Naive thymus-derived CD8-positive, alpha-beta T cell (primary cell): ENCODE measurements at regions of chr22 and their contacts with region 1.

Region 1: DNA sequence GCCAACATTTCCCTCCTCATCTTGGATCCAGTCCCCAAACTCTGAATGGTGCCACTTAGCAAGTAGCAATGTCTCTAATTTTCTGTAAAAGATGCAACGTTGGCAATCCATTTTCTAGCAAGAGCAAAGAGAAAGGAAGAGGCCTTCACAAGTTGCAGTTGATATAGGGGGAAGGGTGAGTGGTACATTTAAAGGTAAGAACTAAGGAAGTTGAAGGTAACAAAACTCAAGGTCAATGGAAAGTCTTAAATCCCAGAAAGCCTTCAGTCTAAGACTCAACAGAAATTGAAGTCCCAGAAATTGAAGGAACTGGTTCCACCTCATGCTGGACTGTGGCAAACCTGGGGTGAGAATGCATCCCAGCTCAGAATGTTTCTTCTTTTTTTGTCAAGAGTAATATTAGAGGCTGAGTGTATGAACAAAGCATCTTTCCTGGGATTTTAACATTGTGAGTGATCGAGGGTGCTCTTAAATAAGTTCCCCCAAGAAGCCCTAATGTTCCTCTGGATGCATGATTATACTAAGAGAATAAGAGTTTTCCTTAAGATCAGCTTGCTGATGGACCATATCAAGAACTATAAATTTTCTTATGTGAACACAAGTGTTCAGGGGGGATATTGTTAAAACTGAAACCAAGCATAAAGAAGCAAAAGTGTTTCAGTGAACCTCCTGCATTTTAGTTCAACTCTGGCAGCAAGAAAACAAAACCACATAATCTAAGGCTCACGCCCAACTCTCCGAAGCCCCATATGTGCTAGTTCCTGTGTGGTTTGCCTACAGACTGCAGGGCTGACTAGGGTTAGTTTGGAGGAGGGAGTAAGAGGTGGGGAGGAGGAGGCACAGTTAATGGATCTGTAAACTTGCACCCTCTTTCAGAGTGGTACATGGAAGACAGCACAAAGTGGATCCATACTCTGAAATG is at the start of gene GRAP2:
- DNase-seq: peak; percentile 28 to 91 (median 76)
- ATAC-seq: peak; percentile 91 to 94
- H3K4me3 Mint-ChIP-seq: peak within 1 kb of the TSS; percentile 79 to 99 (median 94)
- H3K27ac Mint-ChIP-seq: peak within 1 kb of the TSS in 7 of 10 donors; percentile 93 to 100 (median 97)
- H3K4me1 Mint-ChIP-seq: peaks cover 12 to 36% (median 24%) of the 10 kb centered on the region in 4 donors
- H3K27me3 Mint-ChIP-seq: no peaks in the 10 kb centered on the region
- polyA plus RNA-seq, gene GRAP2: 88.3 to 176 (median 133) TPM

Region 2: GRCh38 chr22:39825661-39826102 is 74.9 kb before region 1 on chr22:
- POLR2A ChIA-PET with region 1: no interaction called
- DNase-seq: no peak
- ATAC-seq: peak in 1 of 2 donors; percentile 37
- H3K4me3 Mint-ChIP-seq: peak overlapping the region in 1 of 10 donors; percentile 29
- H3K27ac Mint-ChIP-seq: peak overlapping the region in 1 of 10 donors; percentile 36
- H3K4me1 Mint-ChIP-seq: peaks cover 0 to 25% (median 1%) of the 10 kb centered on the region in 4 donors
- H3K27me3 Mint-ChIP-seq: peaks cover 0 to 4% (median 2%) of the 10 kb centered on the region in 5 donors

Region 3: DNA sequence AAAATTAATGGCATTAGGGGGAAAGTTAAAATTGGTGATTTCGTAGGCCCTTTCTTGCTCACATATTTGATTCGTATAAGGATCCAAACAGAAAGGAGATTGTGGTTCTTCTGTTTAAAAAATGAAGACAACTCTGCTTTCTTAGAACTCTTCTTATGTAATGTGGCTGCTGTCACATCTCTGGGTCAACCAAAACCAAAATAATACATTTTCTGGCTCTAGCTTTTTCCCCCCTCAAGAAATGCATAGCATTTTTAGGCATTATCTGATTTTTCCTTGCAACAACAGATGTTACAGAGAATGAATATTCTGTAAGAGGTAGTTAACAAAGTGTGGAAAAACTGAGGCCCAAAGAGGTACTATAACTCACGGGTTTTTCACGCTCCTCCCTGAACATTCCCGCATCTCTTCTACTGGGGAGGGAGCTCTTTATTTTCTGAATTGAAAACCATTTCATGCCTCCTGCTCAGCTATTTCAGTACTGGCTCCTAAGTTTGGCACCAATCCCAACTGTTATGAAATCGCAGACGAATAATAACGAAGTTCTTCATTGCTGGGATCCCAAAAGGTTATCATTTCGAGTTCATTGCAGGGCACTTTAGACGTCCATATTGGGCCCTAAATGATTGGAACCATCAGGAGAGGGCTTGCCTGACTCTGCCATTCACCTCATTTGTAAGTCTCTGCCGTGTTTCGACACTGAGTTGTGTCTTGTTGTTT is 17.4 kb after region 1 on chr22:
- POLR2A ChIA-PET with region 1: interaction called, 408 read pairs
- DNase-seq: peak in 2 of 10 donors; percentile 51 to 61
- ATAC-seq: peak; percentile 12 to 13
- H3K4me3 Mint-ChIP-seq: peak overlapping the region; percentile 61 to 99 (median 84)
- H3K27ac Mint-ChIP-seq: peak overlapping the region in 8 of 10 donors; percentile 95 to 99 (median 96)
- H3K4me1 Mint-ChIP-seq: peaks cover 54 to 94% (median 90%) of the 10 kb centered on the region in 4 donors
- H3K27me3 Mint-ChIP-seq: no peaks in the 10 kb centered on the region

Region 4: DNA sequence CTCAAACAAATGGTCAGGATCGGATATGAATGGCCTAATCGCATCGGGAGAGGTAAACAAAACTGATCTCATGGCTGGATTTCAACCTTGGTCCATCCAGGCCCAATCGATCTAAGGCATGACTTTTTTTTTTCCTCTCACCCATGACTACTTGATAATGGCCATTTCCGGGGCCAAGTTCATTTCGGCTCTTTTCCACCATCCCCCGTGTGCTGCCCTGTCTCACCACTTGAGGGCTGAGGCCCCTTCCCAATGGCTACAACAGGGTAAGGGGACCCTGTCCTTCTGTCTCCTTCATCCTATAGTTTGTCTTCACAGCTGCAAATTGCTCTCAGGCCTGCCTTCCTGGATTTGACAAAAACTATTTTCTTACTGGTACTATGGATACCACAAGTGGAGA is 27.0 kb after region 1 on chr22:
- POLR2A ChIA-PET with region 1: interaction called, 408 read pairs
- DNase-seq: no peak
- ATAC-seq: no peak
- H3K4me3 Mint-ChIP-seq: no peak overlapping the region
- H3K27ac Mint-ChIP-seq: no peak overlapping the region
- H3K4me1 Mint-ChIP-seq: peaks cover 31 to 54% (median 40%) of the 10 kb centered on the region in 4 donors
- H3K27me3 Mint-ChIP-seq: no peaks in the 10 kb centered on the region

Region 5: GRCh38 chr22:39932918-39933649 is 32.5 kb after region 1 on chr22:
- POLR2A ChIA-PET with region 1: interaction called, 408 read pairs
- DNase-seq: peak; percentile 29 to 81 (median 64)
- ATAC-seq: peak; percentile 15 to 59
- H3K4me3 Mint-ChIP-seq: peak overlapping the region in 9 of 10 donors; percentile 68 to 94 (median 88)
- H3K27ac Mint-ChIP-seq: peak overlapping the region in 6 of 10 donors; percentile 95 to 99 (median 98)
- H3K4me1 Mint-ChIP-seq: peaks cover 43 to 67% (median 56%) of the 10 kb centered on the region in 4 donors
- H3K27me3 Mint-ChIP-seq: no peaks in the 10 kb centered on the region

Region 6: GRCh38 chr22:39938509-39939111 is 38.0 kb after region 1 on chr22:
- POLR2A ChIA-PET with region 1: interaction called, 116 read pairs
- DNase-seq: peak in 3 of 10 donors; percentile 24 to 48 (median 41)
- ATAC-seq: peak; percentile 5 to 15
- H3K4me3 Mint-ChIP-seq: peak overlapping the region in 9 of 10 donors; percentile 68 to 94 (median 88)
- H3K27ac Mint-ChIP-seq: peak overlapping the region in 6 of 10 donors; percentile 95 to 99 (median 98)
- H3K4me1 Mint-ChIP-seq: peaks cover 47 to 97% (median 94%) of the 10 kb centered on the region in 4 donors
- H3K27me3 Mint-ChIP-seq: no peaks in the 10 kb centered on the region

Region 7: GRCh38 chr22:39946503-39947219 is 46.1 kb after region 1 on chr22:
- POLR2A ChIA-PET with region 1: interaction called, 58 read pairs
- DNase-seq: no peak
- ATAC-seq: no peak
- H3K4me3 Mint-ChIP-seq: peak overlapping the region; percentile 60 to 89 (median 75)
- H3K27ac Mint-ChIP-seq: peak overlapping the region in 6 of 10 donors; percentile 95 to 99 (median 97)
- H3K4me1 Mint-ChIP-seq: peaks cover 54 to 100% (median 98%) of the 10 kb centered on the region in 4 donors
- H3K27me3 Mint-ChIP-seq: no peaks in the 10 kb centered on the region

Region 8: GRCh38 chr22:39967996-39968972 is 67.7 kb after region 1 on chr22:
- POLR2A ChIA-PET with region 1: no interaction called
- DNase-seq: no peak
- ATAC-seq: no peak
- H3K4me3 Mint-ChIP-seq: peak overlapping the region in 1 of 10 donors; percentile 33
- H3K27ac Mint-ChIP-seq: peak overlapping the region; percentile 45 to 85 (median 78)
- H3K4me1 Mint-ChIP-seq: peaks cover 7 to 40% (median 26%) of the 10 kb centered on the region in 4 donors
- H3K27me3 Mint-ChIP-seq: no peaks in the 10 kb centered on the region

Region 9: GRCh38 chr22:40024201-40025061 is 123.9 kb after region 1 on chr22:
- POLR2A ChIA-PET with region 1: interaction called, 22 read pairs
- DNase-seq: peak; percentile 29 to 74 (median 54)
- ATAC-seq: peak; percentile 74 to 93
- H3K4me3 Mint-ChIP-seq: no peak overlapping the region
- H3K27ac Mint-ChIP-seq: peak overlapping the region in 4 of 10 donors; percentile 41 to 72 (median 48)
- H3K4me1 Mint-ChIP-seq: peaks cover 2 to 8% (median 6%) of the 10 kb centered on the region in 4 donors
- H3K27me3 Mint-ChIP-seq: no peaks in the 10 kb centered on the region